ENCODE measurements at regions of chr1 and their contacts with region 1.

Region 1: GRCh38 chr1:112619520-112620376 is at the start of gene CAPZA1:
- DNase-seq: peak; percentile 92 to 94 (median 94)
- H3K4me3 ChIP-seq: peak within 1 kb of the TSS; percentile 83 to 98
- H3K4me3 Mint-ChIP-seq: peak within 1 kb of the TSS; percentile 94 to 100 (median 99)
- H3K27ac ChIP-seq: peak within 1 kb of the TSS; percentile 100
- H3K27ac Mint-ChIP-seq: peak within 1 kb of the TSS; percentile 96 to 100 (median 100)
- H3K4me1 ChIP-seq: peaks cover 55% of the 10 kb centered on the region
- H3K4me1 Mint-ChIP-seq: peaks cover 27 to 71% (median 40%) of the 10 kb centered on the region in 4 donors
- H3K27me3 ChIP-seq: no peaks in the 10 kb centered on the region
- H3K27me3 Mint-ChIP-seq: no peaks in the 10 kb centered on the region
- total RNA-seq, gene CAPZA1: 149 to 157 TPM

Region 2: DNA sequence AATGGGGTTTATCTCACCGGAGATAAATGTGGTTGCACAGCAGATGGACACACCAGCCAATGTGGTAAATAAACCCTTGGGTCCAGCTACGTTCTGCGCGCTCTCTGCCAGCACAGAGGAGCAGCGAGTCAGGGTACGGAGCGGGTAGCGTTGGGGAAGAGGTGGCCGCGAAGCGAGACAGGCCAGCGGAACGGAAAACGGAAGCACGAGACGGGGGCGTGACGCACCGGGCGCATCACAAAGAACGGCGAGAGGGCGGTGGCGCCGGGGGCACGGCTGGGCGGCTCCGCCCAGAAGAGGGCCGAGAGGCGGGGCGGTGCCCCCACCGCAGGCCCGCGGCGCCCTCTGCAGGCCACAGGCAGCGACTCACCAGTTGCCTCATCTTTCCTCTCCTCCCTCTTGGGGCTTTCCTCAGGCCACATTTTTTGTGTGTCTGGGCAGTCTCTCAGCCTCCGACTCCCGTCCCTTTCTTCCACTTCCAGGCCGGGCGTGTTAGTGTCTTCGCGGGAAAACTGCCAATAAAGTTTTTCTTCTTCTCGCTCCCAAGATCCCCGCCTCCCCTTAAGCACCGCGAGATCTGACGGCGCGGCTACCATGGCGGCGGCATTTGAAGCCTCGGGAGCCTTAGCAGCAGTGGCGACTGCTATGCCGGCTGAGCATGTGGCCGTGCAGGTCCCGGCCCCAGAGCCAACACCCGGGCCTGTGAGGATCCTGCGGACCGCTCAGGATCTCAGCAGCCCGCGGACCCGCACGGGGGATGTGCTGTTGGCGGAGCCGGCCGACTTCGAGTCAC is 864.2 kb before region 1 on chr1 and contains the start of gene DDX20:
- CTCF ChIA-PET with region 1: no interaction called
- POLR2A ChIA-PET with region 1: no interaction called
- intact Hi-C with region 1: loop called (anchors 5 kb)
- DNase-seq: peak; percentile 94 to 96 (median 95)
- H3K4me3 ChIP-seq: peak within 1 kb of the TSS; percentile 63 to 92
- H3K4me3 Mint-ChIP-seq: peak within 1 kb of the TSS; percentile 90 to 100 (median 98)
- H3K27ac ChIP-seq: peak within 1 kb of the TSS; percentile 93
- H3K27ac Mint-ChIP-seq: peak within 1 kb of the TSS; percentile 97 to 100 (median 99)
- H3K4me1 ChIP-seq: peaks cover 20% of the 10 kb centered on the region
- H3K4me1 Mint-ChIP-seq: peaks cover 26 to 36% (median 33%) of the 10 kb centered on the region in 4 donors
- H3K27me3 ChIP-seq: no peaks in the 10 kb centered on the region
- H3K27me3 Mint-ChIP-seq: peaks cover 0 to 2% of the 10 kb centered on the region in 2 donors
- total RNA-seq, gene DDX20: 22.2 to 26.0 TPM

Region 3: DNA sequence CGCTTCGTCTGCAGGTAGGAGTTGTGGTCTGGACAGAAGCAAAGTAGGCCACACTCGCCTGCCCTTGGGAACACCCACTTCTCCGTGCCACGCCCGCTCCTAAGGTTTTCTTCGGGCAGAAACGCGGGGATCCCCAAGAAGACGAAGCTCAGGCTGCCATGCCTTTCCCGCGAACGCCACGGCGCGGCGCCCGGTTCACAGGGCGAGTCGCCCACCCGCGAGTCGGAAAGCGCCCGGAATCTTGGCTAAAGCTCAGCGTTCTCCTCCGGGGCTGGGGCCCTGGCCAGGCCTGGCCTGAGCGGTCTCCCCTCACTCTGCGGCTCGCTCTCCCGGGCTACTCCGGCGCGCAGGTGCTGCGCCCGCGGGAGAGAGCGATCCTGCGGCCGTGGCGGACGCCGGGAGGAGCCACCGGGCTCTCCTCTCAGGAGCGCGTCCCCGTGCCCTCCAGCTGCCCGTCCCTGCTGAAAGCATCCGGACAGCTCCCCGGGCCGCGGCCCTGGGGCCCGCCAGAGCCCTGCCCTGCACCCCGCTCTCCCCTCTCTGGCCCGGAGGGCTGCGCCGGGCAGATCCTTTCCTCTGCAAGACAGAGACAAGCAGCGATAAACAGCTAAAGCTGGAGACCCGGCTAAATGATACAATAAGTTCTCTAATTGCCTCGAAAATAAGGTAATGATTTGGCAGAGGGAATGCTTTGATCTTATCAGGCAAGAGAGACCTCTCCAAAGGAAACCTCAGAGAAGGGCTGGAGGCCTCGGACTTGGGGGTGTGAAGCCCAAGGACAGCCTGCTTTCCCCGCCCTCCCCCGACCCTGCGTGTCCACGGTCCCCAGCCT is 117.7 kb before region 1 on chr1:
- CTCF ChIA-PET with region 1: interaction called, 45 read pairs
- POLR2A ChIA-PET with region 1: interaction called, 4 read pairs
- intact Hi-C with region 1: loop called (anchors 1 kb)
- DNase-seq: peak in 4 of 5 donors; percentile 30 to 51 (median 38)
- H3K4me3 ChIP-seq: peak overlapping the region; percentile 24 to 36
- H3K4me3 Mint-ChIP-seq: peak overlapping the region; percentile 62 to 84 (median 75)
- H3K27ac ChIP-seq: no peak overlapping the region
- H3K27ac Mint-ChIP-seq: no peak overlapping the region
- H3K4me1 ChIP-seq: peaks cover 5% of the 10 kb centered on the region
- H3K4me1 Mint-ChIP-seq: peaks cover 2 to 13% (median 5%) of the 10 kb centered on the region in 4 donors
- H3K27me3 ChIP-seq: peaks cover 39% of the 10 kb centered on the region
- H3K27me3 Mint-ChIP-seq: peaks cover 43 to 51% of the 10 kb centered on the region in 2 donors

Region 4: GRCh38 chr1:112563341-112563740 is 56.4 kb before region 1 on chr1:
- CTCF ChIA-PET with region 1: no interaction called
- POLR2A ChIA-PET with region 1: no interaction called
- intact Hi-C with region 1: no loop called
- DNase-seq: no peak
- H3K4me3 ChIP-seq: no peak overlapping the region
- H3K4me3 Mint-ChIP-seq: no peak overlapping the region
- H3K27ac ChIP-seq: no peak overlapping the region
- H3K27ac Mint-ChIP-seq: no peak overlapping the region
- H3K4me1 ChIP-seq: no peaks in the 10 kb centered on the region
- H3K4me1 Mint-ChIP-seq: peaks cover 0 to 1% (median 0%) of the 10 kb centered on the region in 4 donors
- H3K27me3 ChIP-seq: no peaks in the 10 kb centered on the region
- H3K27me3 Mint-ChIP-seq: no peaks in the 10 kb centered on the region

Region 5: GRCh38 chr1:112637254-112638116 is 17.7 kb after region 1 on chr1:
- CTCF ChIA-PET with region 1: interaction called, 3 read pairs
- POLR2A ChIA-PET with region 1: interaction called, 29 read pairs
- intact Hi-C with region 1: no loop called
- DNase-seq: no peak
- H3K4me3 ChIP-seq: no peak overlapping the region
- H3K4me3 Mint-ChIP-seq: peak overlapping the region in 4 of 8 donors; percentile 23 to 66 (median 54)
- H3K27ac ChIP-seq: peak overlapping the region; percentile 11
- H3K27ac Mint-ChIP-seq: peak overlapping the region; percentile 36 to 91 (median 80)
- H3K4me1 ChIP-seq: peaks cover 66% of the 10 kb centered on the region
- H3K4me1 Mint-ChIP-seq: peaks cover 40 to 75% (median 54%) of the 10 kb centered on the region in 4 donors
- H3K27me3 ChIP-seq: no peaks in the 10 kb centered on the region
- H3K27me3 Mint-ChIP-seq: no peaks in the 10 kb centered on the region

Region 6: GRCh38 chr1:112706908-112707663 is 87.3 kb after region 1 on chr1 and contains the start of gene RHOC:
- CTCF ChIA-PET with region 1: interaction called, 8 read pairs
- POLR2A ChIA-PET with region 1: interaction called, 31 read pairs
- intact Hi-C with region 1: loop called (anchors 2 kb)
- DNase-seq: peak; percentile 41 to 59 (median 49)
- H3K4me3 ChIP-seq: peak within 1 kb of the TSS in 1 of 2 donors; percentile 45
- H3K4me3 Mint-ChIP-seq: peak within 1 kb of the TSS; percentile 85 to 94 (median 88)
- H3K27ac ChIP-seq: peak within 1 kb of the TSS; percentile 49
- H3K27ac Mint-ChIP-seq: peak within 1 kb of the TSS; percentile 73 to 93 (median 85)
- H3K4me1 ChIP-seq: peaks cover 33% of the 10 kb centered on the region
- H3K4me1 Mint-ChIP-seq: peaks cover 23 to 53% (median 35%) of the 10 kb centered on the region in 4 donors
- H3K27me3 ChIP-seq: no peaks in the 10 kb centered on the region
- H3K27me3 Mint-ChIP-seq: peaks cover 0 to 2% of the 10 kb centered on the region in 2 donors
- total RNA-seq, gene RHOC: 6.1 to 6.7 TPM

Region 7: DNA sequence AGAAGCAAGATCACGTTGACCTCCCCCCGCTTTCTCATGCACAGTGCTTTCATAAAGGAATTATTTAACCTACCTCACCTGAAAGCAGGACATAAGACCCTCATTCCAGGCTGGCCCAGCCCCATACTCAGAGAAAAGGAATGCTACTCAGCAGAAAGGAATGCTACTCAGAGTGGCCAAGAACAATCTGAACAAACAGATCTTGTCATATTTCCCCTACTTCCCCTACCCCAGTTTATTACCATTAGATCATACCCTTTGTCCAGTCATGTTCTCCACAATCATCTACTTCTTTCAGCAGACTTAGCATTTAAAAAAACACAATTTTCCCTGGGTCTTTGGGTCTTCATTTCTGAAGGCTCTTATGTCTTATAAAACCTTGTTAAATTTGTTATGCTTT is 246.4 kb after region 1 on chr1:
- CTCF ChIA-PET with region 1: no interaction called
- POLR2A ChIA-PET with region 1: no interaction called
- intact Hi-C with region 1: no loop called
- DNase-seq: no peak
- H3K4me3 ChIP-seq: no peak overlapping the region
- H3K4me3 Mint-ChIP-seq: no peak overlapping the region
- H3K27ac ChIP-seq: no peak overlapping the region
- H3K27ac Mint-ChIP-seq: no peak overlapping the region
- H3K4me1 ChIP-seq: peaks cover 4% of the 10 kb centered on the region
- H3K4me1 Mint-ChIP-seq: peaks cover 4 to 13% (median 5%) of the 10 kb centered on the region in 4 donors
- H3K27me3 ChIP-seq: no peaks in the 10 kb centered on the region
- H3K27me3 Mint-ChIP-seq: peaks cover 0 to 2% of the 10 kb centered on the region in 2 donors

Region 8: GRCh38 chr1:113389953-113390834 is 770.4 kb after region 1 on chr1 and contains the start of gene MAGI3:
- CTCF ChIA-PET with region 1: no interaction called
- POLR2A ChIA-PET with region 1: no interaction called
- intact Hi-C with region 1: loop called (anchors 2 kb)
- DNase-seq: peak; percentile 92 to 94 (median 93)
- H3K4me3 ChIP-seq: peak within 1 kb of the TSS; percentile 44 to 89
- H3K4me3 Mint-ChIP-seq: peak within 1 kb of the TSS; percentile 88 to 98 (median 92)
- H3K27ac ChIP-seq: peak within 1 kb of the TSS; percentile 60
- H3K27ac Mint-ChIP-seq: peak within 1 kb of the TSS; percentile 80 to 95 (median 91)
- H3K4me1 ChIP-seq: peaks cover 30% of the 10 kb centered on the region
- H3K4me1 Mint-ChIP-seq: peaks cover 20 to 36% (median 23%) of the 10 kb centered on the region in 4 donors
- H3K27me3 ChIP-seq: no peaks in the 10 kb centered on the region
- H3K27me3 Mint-ChIP-seq: no peaks in the 10 kb centered on the region
- total RNA-seq, gene MAGI3: 6.5 to 6.7 TPM

Region 9: DNA sequence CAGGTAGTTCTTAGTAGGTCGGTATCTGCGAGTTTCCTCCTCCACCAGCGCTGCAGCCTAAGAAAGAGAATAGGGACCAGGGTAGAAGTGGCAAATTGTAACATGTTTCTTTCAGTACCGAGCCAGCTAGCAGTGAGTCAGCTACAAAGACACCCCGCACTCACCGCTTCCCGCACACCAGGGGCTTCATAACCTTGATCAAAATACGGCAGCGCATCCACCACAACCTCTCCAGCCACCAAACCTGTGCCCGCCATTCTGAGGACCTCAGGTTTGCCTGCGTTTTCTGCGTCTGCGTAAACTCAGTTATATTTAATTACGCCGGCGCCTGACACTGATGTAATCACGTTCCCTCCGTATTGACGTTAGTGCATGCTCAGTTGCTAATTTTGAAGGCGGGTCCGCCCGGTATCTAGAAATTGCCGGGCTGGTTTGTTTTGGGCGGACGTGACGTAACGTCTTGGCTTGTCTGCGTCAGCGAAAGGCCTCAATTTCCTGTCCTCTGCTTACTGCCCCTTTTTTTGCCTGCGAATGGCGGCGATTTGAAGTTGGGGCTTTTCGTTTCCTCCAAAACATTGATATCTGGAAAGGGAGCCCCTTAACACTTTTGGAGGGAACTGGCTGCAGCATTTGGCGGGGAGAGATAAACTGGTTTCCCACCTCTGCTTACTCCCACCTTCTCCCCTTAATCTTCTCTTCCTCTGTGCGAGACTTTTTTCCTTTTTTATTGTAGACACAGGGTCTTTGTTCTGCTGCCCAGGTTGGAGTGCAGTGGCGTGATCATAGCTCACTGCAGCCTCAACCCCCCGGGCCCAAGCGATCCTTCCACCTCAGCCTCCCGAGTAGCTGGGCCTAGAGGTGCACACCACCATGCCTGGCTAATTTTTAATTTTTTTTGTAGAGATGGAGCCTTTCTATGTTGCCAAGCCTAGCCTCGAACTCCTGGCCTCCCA is 1961.9 kb after region 1 on chr1 and contains the start of gene BCAS2:
- CTCF ChIA-PET with region 1: no interaction called
- POLR2A ChIA-PET with region 1: no interaction called
- intact Hi-C with region 1: loop called (anchors 2 kb)
- DNase-seq: peak; percentile 93 to 98 (median 97)
- H3K4me3 ChIP-seq: peak within 1 kb of the TSS; percentile 76 to 80
- H3K4me3 Mint-ChIP-seq: peak within 1 kb of the TSS; percentile 95 to 99 (median 96)
- H3K27ac ChIP-seq: peak within 1 kb of the TSS; percentile 90
- H3K27ac Mint-ChIP-seq: peak within 1 kb of the TSS; percentile 92 to 100 (median 99)
- H3K4me1 ChIP-seq: peaks cover 30% of the 10 kb centered on the region
- H3K4me1 Mint-ChIP-seq: peaks cover 14 to 42% (median 27%) of the 10 kb centered on the region in 4 donors
- H3K27me3 ChIP-seq: no peaks in the 10 kb centered on the region
- H3K27me3 Mint-ChIP-seq: peaks cover 0 to 1% of the 10 kb centered on the region in 2 donors
- total RNA-seq, gene BCAS2: 33.9 to 40.8 TPM

Measured in CD4-positive, alpha-beta memory T cell (primary cell).